Sigmoid colon (tissue), 7 donors: ENCODE measurements at regions of chr16 and their contacts with region 1.

Region 1: DNA sequence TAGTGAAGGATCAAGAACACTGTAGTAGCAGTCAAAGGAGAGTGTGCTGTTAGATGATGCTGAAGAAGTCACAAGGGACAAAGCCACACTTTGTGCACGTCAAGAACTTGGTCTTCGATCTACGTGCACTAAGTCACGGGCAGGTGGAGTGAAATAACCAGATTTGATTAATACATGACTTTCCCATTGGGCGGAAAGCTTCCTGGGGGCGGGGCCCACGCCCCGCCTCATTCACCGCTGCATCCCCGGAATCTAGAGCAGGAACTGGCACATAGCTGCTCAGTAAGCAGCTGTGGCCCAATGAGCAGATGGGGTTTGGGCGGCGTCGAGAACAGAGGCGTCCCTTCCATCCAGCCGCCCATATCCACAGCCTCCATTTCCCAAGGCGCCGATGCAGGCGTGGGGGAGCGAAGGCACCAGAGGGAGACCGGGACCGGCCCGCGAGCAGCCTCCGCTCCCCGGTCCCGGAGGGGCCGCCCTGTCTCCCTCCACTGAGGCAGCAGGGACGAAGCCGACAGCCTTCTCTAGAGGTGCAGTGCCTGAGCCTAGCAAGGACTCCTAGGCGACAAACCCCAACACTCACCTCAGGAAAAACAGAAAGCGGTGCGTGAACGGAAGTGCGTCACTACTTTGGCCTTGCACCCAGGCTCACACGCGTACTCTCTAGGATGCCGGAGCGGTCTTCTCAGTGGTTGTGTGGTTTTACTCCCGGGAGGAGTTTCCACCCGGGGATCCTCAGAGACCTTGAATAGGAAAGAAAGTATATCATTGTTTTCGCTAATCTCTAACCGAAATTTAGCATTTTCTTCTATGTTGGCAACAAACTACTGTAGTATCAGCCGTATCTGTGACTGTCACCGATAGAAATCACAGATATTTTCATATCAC is 4.9 kb downstream of the ZNF19 start:
- DNase-seq: peak; percentile 94
- H3K4me3 ChIP-seq: peak overlapping the region; percentile 78 to 91 (median 84)
- H3K27ac ChIP-seq: peak overlapping the region; percentile 95 to 98 (median 96)
- H3K4me1 ChIP-seq: peaks cover 0 to 12% (median 7%) of the 10 kb centered on the region in 4 donors
- H3K27me3 ChIP-seq: no peaks in the 10 kb centered on the region
- CTCF ChIP-seq: no peak
- EP300 ChIP-seq: peak in 1 of 4 donors; percentile 44
- POLR2A ChIP-seq: peak; percentile 46 to 65

Region 2: DNA sequence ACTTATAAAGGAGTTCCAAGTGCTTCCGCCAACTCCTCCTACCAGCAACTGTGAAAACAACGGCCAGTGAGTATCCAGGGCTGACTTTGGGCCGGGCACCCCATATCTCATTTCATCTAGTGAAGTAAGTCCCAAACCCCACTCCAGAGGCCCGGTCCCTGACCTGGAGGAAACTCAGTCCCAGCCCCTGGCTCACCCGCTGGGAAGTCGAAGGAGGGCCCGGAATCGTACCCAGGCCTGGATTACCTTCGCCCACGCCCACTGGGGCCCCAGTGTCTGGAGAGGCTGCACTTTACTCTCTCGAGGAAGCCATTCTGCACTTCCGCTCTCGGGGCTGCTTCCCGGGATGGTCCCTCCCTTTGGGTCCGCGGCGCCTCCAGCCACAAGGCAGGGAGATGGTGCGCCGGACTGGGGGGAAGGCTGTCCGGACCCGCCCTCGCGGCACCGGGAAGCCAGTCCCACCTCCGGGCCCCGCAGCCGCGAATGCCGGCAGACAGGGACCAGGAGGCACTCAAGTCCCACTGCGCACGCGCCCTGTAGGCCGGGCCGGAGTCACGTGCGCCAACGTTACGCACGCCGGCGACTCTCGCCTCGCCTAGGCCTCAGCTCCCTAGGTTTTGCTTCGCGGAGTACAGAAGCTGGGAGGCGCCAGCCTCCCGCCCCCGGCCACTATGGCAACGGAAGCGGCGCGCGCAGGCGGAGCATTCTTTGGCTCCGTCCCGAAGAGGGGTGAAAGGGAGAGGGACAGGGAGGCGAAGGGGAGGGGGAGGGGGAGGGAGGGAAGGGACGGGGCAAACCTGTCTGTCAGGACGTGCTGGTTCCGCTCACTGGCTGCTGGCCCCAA is 195.1 kb before region 1 on chr16 and contains the start of gene CMTR2:
- intact Hi-C with region 1: loop called (anchors 10 kb)
- DNase-seq: peak; percentile 98
- H3K4me3 ChIP-seq: peak within 1 kb of the TSS; percentile 64 to 91 (median 70)
- H3K27ac ChIP-seq: peak within 1 kb of the TSS; percentile 82 to 95 (median 90)
- H3K4me1 ChIP-seq: peaks cover 0 to 14% (median 6%) of the 10 kb centered on the region in 4 donors
- H3K27me3 ChIP-seq: no peaks in the 10 kb centered on the region
- CTCF ChIP-seq: no peak
- EP300 ChIP-seq: no peak
- POLR2A ChIP-seq: peak; percentile 52 to 69
- total RNA-seq, gene CMTR2: 15.5 to 25.7 (median 20.4) TPM

Region 3: GRCh38 chr16:71461686-71462648 is 22.3 kb before region 1 on chr16 and contains the start of gene ZNF23:
- intact Hi-C with region 1: loop called (anchors 1 kb)
- DNase-seq: peak; percentile 94
- H3K4me3 ChIP-seq: peak within 1 kb of the TSS; percentile 76 to 92 (median 78)
- H3K27ac ChIP-seq: peak within 1 kb of the TSS; percentile 86 to 95 (median 92)
- H3K4me1 ChIP-seq: peaks cover 0 to 28% (median 22%) of the 10 kb centered on the region in 4 donors
- H3K27me3 ChIP-seq: no peaks in the 10 kb centered on the region
- CTCF ChIP-seq: no peak
- EP300 ChIP-seq: peak in 1 of 4 donors; percentile 54
- POLR2A ChIP-seq: peak; percentile 62 to 90
- total RNA-seq, gene ZNF23: 3.9 to 11.6 (median 7.5) TPM

Region 4: GRCh38 chr16:71723537-71724319 is 239.5 kb after region 1 on chr16:
- intact Hi-C with region 1: loop called (anchors 10 kb)
- DNase-seq: peak; percentile 87
- H3K4me3 ChIP-seq: peak overlapping the region; percentile 58 to 96 (median 78)
- H3K27ac ChIP-seq: peak overlapping the region; percentile 81 to 99 (median 96)
- H3K4me1 ChIP-seq: peaks cover 0 to 34% (median 23%) of the 10 kb centered on the region in 4 donors
- H3K27me3 ChIP-seq: no peaks in the 10 kb centered on the region
- CTCF ChIP-seq: no peak
- EP300 ChIP-seq: no peak
- POLR2A ChIP-seq: no peak